ENCODE measurements at regions of chr2 and their contacts with region 1.

Region 1: GRCh38 chr2:46252891-46253669 is 44.1 kb upstream of the EPAS1 start:
- DNase-seq: no peak
- ATAC-seq: 0 out of 3 replicates have a peak, but pooled peaks have one; percentile 15
- H3K4me3 ChIP-seq: no peak overlapping the region
- H3K27ac ChIP-seq: no peak overlapping the region
- H3K4me1 ChIP-seq: no peaks in the 10 kb centered on the region
- H3K27me3 ChIP-seq: no peaks in the 10 kb centered on the region
- CTCF ChIP-seq: no peak
- EP300 ChIP-seq: no peak
- POLR2A ChIP-seq: no peak
- RAD21 ChIP-seq: no peak

Region 2: DNA sequence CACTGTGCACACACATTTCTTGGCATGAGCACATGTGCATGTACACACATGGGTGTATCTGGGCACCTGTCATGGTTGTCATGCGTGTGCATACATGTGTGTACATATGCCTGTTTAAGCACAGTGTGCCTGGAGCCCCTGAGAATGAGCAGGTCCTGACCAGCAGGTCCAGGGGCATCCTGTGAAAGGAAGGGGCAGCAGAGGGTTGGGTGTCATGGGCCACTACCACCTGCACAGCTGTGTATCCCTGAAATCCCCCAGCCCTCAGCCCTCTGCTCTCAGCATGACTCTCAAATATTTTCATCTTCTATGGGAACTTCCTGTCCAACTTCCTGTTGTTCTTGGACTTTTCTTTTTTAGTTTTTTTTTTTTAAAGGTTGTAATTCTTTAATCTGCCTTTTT is 52.9 kb before region 1 on chr2:
- CTCF ChIA-PET with region 1: no interaction called
- POLR2A ChIA-PET with region 1: no interaction called
- RAD21 ChIA-PET with region 1: no interaction called
- SMC1A ChIA-PET with region 1: no interaction called
- in situ Hi-C with region 1: no loop called
- intact Hi-C with region 1: no loop called
- DNase-seq: no peak
- ATAC-seq: peak; percentile 85
- H3K4me3 ChIP-seq: no peak overlapping the region
- H3K27ac ChIP-seq: no peak overlapping the region
- H3K4me1 ChIP-seq: peaks cover 3% of the 10 kb centered on the region
- H3K27me3 ChIP-seq: no peaks in the 10 kb centered on the region
- CTCF ChIP-seq: no peak
- EP300 ChIP-seq: no peak
- POLR2A ChIP-seq: no peak
- RAD21 ChIP-seq: no peak

Region 3: GRCh38 chr2:46241344-46241743 is 11.7 kb before region 1 on chr2:
- CTCF ChIA-PET with region 1: interaction called, 4 read pairs
- POLR2A ChIA-PET with region 1: no interaction called
- RAD21 ChIA-PET with region 1: no interaction called
- SMC1A ChIA-PET with region 1: interaction called, 12 read pairs
- in situ Hi-C with region 1: no loop called
- intact Hi-C with region 1: no loop called
- DNase-seq: no peak
- ATAC-seq: peak; percentile 74
- H3K4me3 ChIP-seq: no peak overlapping the region
- H3K27ac ChIP-seq: no peak overlapping the region
- H3K4me1 ChIP-seq: peaks cover 7% of the 10 kb centered on the region
- H3K27me3 ChIP-seq: no peaks in the 10 kb centered on the region
- CTCF ChIP-seq: no peak
- EP300 ChIP-seq: no peak
- POLR2A ChIP-seq: no peak
- RAD21 ChIP-seq: no peak

Region 4: DNA sequence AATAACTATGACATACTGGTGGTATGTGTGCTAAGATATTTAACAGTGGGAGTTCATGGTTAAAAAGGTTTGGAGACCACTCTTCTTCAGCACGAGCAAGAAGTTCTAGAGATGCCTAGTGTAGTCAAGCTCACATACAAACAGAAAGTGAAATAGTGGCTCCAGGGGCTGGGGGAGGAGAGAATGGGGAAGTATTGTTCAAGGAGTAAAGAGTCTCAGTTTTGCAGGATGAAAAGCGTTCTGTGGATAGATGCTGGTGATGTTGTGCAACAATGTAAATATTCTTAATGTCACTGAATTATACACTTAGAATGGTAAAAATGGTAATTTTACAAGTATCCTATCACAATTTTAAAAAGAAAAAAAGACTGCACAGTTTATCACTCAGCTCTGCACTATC is 15.1 kb after region 1 on chr2:
- CTCF ChIA-PET with region 1: no interaction called
- POLR2A ChIA-PET with region 1: interaction called, 3 read pairs
- RAD21 ChIA-PET with region 1: interaction called, 3 read pairs
- SMC1A ChIA-PET with region 1: interaction called, 10 read pairs
- in situ Hi-C with region 1: no loop called
- intact Hi-C with region 1: no loop called
- DNase-seq: peak; percentile 21
- ATAC-seq: peak; percentile 90
- H3K4me3 ChIP-seq: no peak overlapping the region
- H3K27ac ChIP-seq: no peak overlapping the region
- H3K4me1 ChIP-seq: no peaks in the 10 kb centered on the region
- H3K27me3 ChIP-seq: no peaks in the 10 kb centered on the region
- CTCF ChIP-seq: no peak
- EP300 ChIP-seq: no peak
- POLR2A ChIP-seq: no peak
- RAD21 ChIP-seq: no peak

Region 5: DNA sequence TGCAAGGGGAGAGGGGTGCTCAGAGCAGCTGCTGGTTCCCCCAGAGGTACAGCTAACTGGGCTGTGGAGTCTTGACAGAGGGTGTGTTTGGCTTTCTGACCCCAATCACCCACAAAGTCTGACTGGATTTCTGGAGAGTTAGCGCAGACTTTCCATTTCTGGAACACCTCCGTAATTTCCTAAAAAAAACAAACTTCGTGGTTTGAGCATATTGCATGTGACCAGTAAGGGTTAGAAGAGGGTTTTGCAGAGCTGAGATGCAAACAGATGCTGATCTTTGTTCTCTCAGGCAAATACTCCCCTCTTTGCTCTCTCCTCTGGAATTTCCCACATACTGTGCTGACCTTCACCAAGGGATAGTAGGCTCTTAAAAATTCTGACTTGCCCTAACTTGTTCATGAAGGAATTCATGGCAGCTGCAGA is 181.8 kb after region 1 on chr2:
- CTCF ChIA-PET with region 1: no interaction called
- POLR2A ChIA-PET with region 1: no interaction called
- RAD21 ChIA-PET with region 1: no interaction called
- SMC1A ChIA-PET with region 1: no interaction called
- in situ Hi-C with region 1: no loop called
- intact Hi-C with region 1: no loop called
- DNase-seq: no peak
- ATAC-seq: no peak
- H3K4me3 ChIP-seq: no peak overlapping the region
- H3K27ac ChIP-seq: no peak overlapping the region
- H3K4me1 ChIP-seq: no peaks in the 10 kb centered on the region
- H3K27me3 ChIP-seq: no peaks in the 10 kb centered on the region; a peak in 1 of 4 replicates
- CTCF ChIP-seq: no peak
- EP300 ChIP-seq: no peak
- POLR2A ChIP-seq: no peak
- RAD21 ChIP-seq: no peak

Region 6: DNA sequence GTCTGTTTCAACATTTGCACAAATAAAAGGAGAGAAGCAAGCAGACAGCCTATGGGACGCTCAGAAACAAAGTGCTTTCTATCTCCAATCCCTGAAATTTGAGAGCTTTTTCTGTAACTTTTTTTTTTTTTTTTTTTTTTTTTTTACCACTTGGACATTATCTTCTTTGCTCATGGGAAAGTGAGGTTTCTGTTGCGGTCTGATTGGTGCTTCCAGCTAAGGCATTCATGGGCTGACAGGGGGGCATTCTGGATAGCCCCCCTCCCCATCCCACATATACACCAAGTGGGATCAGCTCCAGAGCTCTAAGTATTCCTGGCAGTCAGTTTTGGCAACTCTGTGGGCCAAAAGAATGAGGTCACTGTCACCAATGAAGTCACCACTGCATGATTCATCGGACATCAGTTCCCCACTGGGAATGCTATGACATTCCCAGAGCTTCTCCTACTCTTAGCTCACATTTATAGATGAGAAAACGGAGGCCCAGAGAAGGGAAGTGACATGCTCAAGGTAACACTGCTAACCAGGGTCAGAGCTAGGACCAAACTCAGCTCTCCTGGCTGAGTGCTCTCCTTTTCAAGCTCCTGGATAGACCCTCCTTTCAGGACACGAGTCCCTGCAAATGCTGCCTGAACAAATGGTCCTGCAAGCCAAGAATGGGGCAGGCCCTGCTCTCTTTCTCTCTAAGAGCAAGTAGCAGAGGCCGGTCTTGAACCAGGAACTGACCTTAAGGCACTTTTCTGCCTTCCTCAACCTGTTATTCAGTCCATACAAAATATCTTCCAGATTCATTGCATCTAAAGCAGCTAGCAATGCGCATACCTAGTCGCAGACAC is 287.6 kb after region 1 on chr2:
- CTCF ChIA-PET with region 1: no interaction called
- POLR2A ChIA-PET with region 1: no interaction called
- RAD21 ChIA-PET with region 1: no interaction called
- SMC1A ChIA-PET with region 1: no interaction called
- in situ Hi-C with region 1: no loop called
- intact Hi-C with region 1: no loop called
- DNase-seq: no peak
- ATAC-seq: no peak
- H3K4me3 ChIP-seq: peak overlapping the region; percentile 58
- H3K27ac ChIP-seq: 0 out of 2 replicates have a peak overlapping the region, but pooled peaks have one; percentile 77
- H3K4me1 ChIP-seq: peaks cover 43% of the 10 kb centered on the region
- H3K27me3 ChIP-seq: no peaks in the 10 kb centered on the region
- CTCF ChIP-seq: no peak
- EP300 ChIP-seq: no peak
- POLR2A ChIP-seq: no peak
- RAD21 ChIP-seq: no peak

Region 7: DNA sequence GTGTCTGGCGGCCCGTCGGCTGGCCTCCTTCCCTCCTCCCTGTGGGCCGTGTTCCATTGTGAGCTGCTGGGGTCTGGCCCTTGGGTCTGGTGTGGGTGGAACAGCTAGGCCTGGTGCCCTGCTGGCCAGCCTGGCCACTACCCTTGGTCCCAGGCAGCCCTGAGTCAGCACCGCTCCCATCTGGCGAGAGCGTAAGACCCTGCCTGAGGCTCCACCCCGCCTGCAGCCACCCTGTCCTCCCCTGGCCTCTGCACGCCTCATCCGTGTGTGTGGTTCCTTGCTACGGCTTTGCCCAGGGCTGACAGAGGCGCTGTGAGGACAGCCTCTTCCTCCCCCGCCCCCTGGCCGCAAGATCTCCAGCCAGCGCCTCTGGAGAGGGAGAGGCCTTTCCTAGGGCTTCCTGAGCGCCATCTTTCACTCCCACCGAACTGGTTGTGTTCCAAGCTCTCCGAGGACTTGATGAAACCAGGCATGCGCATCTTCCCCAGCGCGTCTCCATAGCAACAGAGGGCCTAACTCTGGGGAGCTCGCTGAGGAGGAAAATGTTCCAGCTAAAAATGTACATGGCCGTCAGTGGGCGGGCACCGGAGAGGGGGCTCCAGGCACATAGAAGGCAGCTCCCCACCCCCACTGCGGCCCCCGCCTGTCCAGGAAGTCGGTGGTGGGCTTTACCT is 819.1 kb after region 1 on chr2:
- CTCF ChIA-PET with region 1: no interaction called
- POLR2A ChIA-PET with region 1: no interaction called
- RAD21 ChIA-PET with region 1: no interaction called
- SMC1A ChIA-PET with region 1: no interaction called
- in situ Hi-C with region 1: no loop called
- intact Hi-C with region 1: no loop called
- DNase-seq: no peak
- ATAC-seq: peak; percentile 5
- H3K4me3 ChIP-seq: no peak overlapping the region
- H3K27ac ChIP-seq: no peak overlapping the region
- H3K4me1 ChIP-seq: peaks cover 30% of the 10 kb centered on the region
- H3K27me3 ChIP-seq: no peaks in the 10 kb centered on the region
- CTCF ChIP-seq: 0 out of 6 replicates have a peak, but pooled peaks of 1 of the 3 experiments have one; percentile 2
- EP300 ChIP-seq: no peak
- POLR2A ChIP-seq: no peak
- RAD21 ChIP-seq: no peak